ENCODE measurements at regions of chr20 and their contacts with region 1.

Region 1: DNA sequence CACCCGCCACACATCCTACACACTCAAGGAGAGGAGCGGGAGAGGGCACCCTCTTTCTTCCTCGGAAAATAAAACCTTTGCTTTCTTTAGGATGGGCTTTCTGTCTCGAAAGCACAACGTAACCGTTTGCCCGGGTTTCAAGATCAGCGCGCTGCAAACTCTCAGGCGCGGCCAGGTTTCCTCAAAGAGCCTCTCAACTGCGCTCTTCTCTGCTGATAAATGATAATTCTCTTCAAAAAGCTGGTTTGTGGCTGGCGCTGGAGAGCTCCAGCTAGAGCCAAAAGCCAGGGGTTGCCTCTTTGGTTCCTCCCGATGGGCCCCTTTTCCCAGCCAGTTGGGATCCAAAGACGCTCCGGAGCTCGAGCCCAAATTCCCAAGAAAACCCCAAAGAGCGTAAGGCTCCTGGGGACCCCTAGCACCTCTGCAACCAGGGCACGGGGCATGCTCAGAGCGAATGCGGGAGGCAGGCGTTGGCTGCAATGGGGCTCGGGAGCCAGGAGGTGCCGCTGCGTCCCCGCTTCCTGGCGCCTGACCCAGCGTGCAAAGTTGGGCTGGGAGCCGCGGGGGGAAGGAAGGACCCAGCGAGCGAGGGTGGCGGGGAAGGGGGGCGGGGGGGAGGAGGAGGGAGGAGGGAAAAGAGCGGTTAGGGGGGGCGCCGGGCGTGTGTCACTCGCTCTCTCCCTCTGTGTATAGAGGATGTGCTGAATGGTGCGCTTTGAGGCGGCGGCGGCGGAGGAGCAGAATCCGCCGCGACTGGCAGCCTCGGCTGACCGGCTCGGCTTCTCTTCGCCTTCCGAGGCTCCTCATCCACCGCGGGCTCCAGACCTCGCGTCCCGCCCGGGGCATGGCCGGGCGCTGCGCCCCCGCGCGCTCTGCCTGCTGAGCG is at the start of gene PLCB1:
- DNase-seq: peak; percentile 72
- ATAC-seq: peak; percentile 92
- H3K4me3 ChIP-seq: peak within 1 kb of the TSS; percentile 56
- H3K27ac ChIP-seq: no peak within 1 kb of the TSS
- H3K4me1 ChIP-seq: peaks cover 7% of the 10 kb centered on the region; the same call in 1 of the 2 replicates
- H3K27me3 ChIP-seq: peaks cover 79% of the 10 kb centered on the region
- CTCF ChIP-seq: peak; percentile 74
- total RNA-seq, gene PLCB1: 4.4 TPM in 2 replicates

Region 2: GRCh38 chr20:7897781-7898364 is 234.0 kb before region 1 on chr20:
- CTCF ChIA-PET with region 1: no interaction called
- POLR2A ChIA-PET with region 1: no interaction called
- intact Hi-C with region 1: no loop called
- DNase-seq: no peak
- ATAC-seq: no peak
- H3K4me3 ChIP-seq: no peak overlapping the region
- H3K27ac ChIP-seq: no peak overlapping the region
- H3K4me1 ChIP-seq: peaks cover 16% of the 10 kb centered on the region
- H3K27me3 ChIP-seq: no peaks in the 10 kb centered on the region
- CTCF ChIP-seq: no peak

Region 3: DNA sequence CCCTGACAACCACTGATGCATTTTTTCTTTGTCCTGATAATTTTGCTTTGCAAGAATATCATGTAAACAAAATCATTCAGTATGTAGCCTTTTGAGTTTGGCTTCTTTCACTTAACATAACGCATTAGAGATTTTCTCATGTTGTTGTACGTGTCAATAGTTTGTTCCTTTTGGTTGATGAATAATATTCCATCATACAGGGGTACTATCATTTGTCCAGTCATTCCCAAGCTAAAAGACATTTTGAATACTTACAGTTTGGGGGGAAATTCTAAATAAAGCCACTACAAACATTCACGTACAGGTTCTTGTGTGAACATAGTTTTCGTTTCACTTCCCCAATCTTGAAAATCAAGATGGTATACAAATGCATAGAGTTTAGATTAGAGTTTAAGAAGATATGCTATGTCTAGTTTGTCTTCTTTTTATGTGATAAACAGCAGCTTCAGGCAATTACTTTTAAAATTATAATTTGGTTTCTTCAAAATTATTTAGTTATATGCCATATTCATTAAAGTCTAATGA is 196.8 kb before region 1 on chr20:
- CTCF ChIA-PET with region 1: interaction called, 13 read pairs
- POLR2A ChIA-PET with region 1: no interaction called
- intact Hi-C with region 1: no loop called
- DNase-seq: no peak
- ATAC-seq: no peak
- H3K4me3 ChIP-seq: no peak overlapping the region
- H3K27ac ChIP-seq: no peak overlapping the region
- H3K4me1 ChIP-seq: peaks cover 7% of the 10 kb centered on the region
- H3K27me3 ChIP-seq: peaks cover 3% of the 10 kb centered on the region; the same call in 1 of the 2 replicates
- CTCF ChIP-seq: no peak

Region 4: GRCh38 chr20:8036771-8037170 is 95.1 kb before region 1 on chr20:
- CTCF ChIA-PET with region 1: no interaction called
- POLR2A ChIA-PET with region 1: no interaction called
- intact Hi-C with region 1: no loop called
- DNase-seq: no peak
- ATAC-seq: no peak
- H3K4me3 ChIP-seq: no peak overlapping the region
- H3K27ac ChIP-seq: no peak overlapping the region
- H3K4me1 ChIP-seq: no peaks in the 10 kb centered on the region
- H3K27me3 ChIP-seq: peaks cover 73% of the 10 kb centered on the region
- CTCF ChIP-seq: no peak

Region 5: GRCh38 chr20:8089668-8090067 is 42.2 kb before region 1 on chr20:
- CTCF ChIA-PET with region 1: no interaction called
- POLR2A ChIA-PET with region 1: no interaction called
- intact Hi-C with region 1: no loop called
- DNase-seq: no peak
- ATAC-seq: no peak
- H3K4me3 ChIP-seq: no peak overlapping the region
- H3K27ac ChIP-seq: no peak overlapping the region
- H3K4me1 ChIP-seq: peaks cover 6% of the 10 kb centered on the region; the same call in 1 of the 2 replicates
- H3K27me3 ChIP-seq: peaks cover 44% of the 10 kb centered on the region; the same call in 1 of the 2 replicates
- CTCF ChIP-seq: no peak

Region 6: GRCh38 chr20:8284902-8285301 is 153.1 kb after region 1 on chr20:
- CTCF ChIA-PET with region 1: no interaction called
- POLR2A ChIA-PET with region 1: no interaction called
- intact Hi-C with region 1: loop called (anchors 5 kb)
- DNase-seq: no peak
- ATAC-seq: no peak
- H3K4me3 ChIP-seq: no peak overlapping the region
- H3K27ac ChIP-seq: no peak overlapping the region
- H3K4me1 ChIP-seq: no peaks in the 10 kb centered on the region
- H3K27me3 ChIP-seq: peaks cover 12% of the 10 kb centered on the region; the same call in 1 of the 2 replicates
- CTCF ChIP-seq: no peak

Region 7: GRCh38 chr20:8389381-8390036 is 257.7 kb after region 1 on chr20:
- CTCF ChIA-PET with region 1: no interaction called
- POLR2A ChIA-PET with region 1: no interaction called
- intact Hi-C with region 1: loop called (anchors 1 kb)
- DNase-seq: peak; percentile 72
- ATAC-seq: peak; percentile 29; the same call in 1 of the 2 replicates
- H3K4me3 ChIP-seq: no peak overlapping the region
- H3K27ac ChIP-seq: no peak overlapping the region
- H3K4me1 ChIP-seq: no peaks in the 10 kb centered on the region
- H3K27me3 ChIP-seq: no peaks in the 10 kb centered on the region
- CTCF ChIP-seq: peak; percentile 74

Region 8: GRCh38 chr20:8535403-8536261 is 403.8 kb after region 1 on chr20:
- CTCF ChIA-PET with region 1: no interaction called
- POLR2A ChIA-PET with region 1: no interaction called
- intact Hi-C with region 1: loop called (anchors 2 kb)
- DNase-seq: peak; percentile 35
- ATAC-seq: peak; percentile 45; the same call in 1 of the 2 replicates
- H3K4me3 ChIP-seq: no peak overlapping the region
- H3K27ac ChIP-seq: no peak overlapping the region
- H3K4me1 ChIP-seq: no peaks in the 10 kb centered on the region
- H3K27me3 ChIP-seq: peaks cover 28% of the 10 kb centered on the region; the same call in 1 of the 2 replicates
- CTCF ChIP-seq: peak; percentile 71

Measured in PC-3 (cell line).